ENCODE measurements at regions of chr1 and their contacts with region 1.

Region 1: GRCh38 chr1:7989762-7990428 is 28.4 kb downstream of the PARK7 start:
- DNase-seq: no peak
- ATAC-seq: no peak
- H3K4me3 ChIP-seq: no peak overlapping the region
- H3K27ac ChIP-seq: no peak overlapping the region
- H3K4me1 ChIP-seq: no peaks in the 10 kb centered on the region
- H3K27me3 ChIP-seq: no peaks in the 10 kb centered on the region
- CTCF ChIP-seq: no peak

Region 2: GRCh38 chr1:8314346-8315280 is 324.7 kb after region 1 on chr1:
- intact Hi-C with region 1: loop called (anchors 10 kb)
- DNase-seq: peak; percentile 84
- ATAC-seq: peak; percentile 91
- H3K4me3 ChIP-seq: no peak overlapping the region
- H3K27ac ChIP-seq: no peak overlapping the region
- H3K4me1 ChIP-seq: peaks cover 13% of the 10 kb centered on the region
- H3K27me3 ChIP-seq: peaks cover 3% of the 10 kb centered on the region
- CTCF ChIP-seq: peak; percentile 88

Measured in upper lobe of right lung (tissue), 1 donor.